Dorsolateral prefrontal cortex (tissue), 120 donors: ENCODE measurements at regions of chr3 and their contacts with region 1.

Region 1: DNA sequence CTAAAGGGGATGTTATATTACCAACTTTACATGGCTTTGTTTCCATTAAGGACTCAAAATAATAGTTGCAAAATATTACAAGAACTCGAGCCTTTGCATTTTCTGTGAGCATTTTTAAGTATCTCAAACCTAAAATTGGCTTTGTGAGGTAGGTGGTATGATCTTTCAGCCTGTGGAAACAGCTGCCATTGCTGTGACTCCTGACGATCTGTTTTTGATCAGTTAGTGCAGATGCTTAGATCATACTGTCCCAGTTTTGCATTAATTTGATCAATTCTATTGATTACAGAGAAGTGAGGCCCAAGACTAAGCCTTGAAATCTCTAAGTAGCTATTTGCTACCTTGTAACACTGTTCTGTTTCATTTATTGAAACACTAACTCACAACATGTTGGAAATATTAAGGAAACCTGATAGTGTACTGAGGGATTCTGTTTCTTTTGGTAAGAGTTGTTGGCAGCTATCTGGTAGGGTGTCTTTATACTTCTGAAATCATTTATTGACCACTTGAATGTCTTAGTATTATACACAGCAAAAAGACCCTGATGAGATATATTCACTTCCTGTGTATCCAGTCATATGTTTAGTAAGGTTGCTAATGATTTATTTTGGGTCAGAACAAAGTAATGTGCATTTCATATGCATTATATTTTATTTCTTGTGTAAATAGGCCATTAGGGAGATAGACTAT is 14.8 kb downstream of the SKIL start:
- DNase-seq: no peak
- H3K4me3 ChIP-seq: peak overlapping the region in 7 of 59 donors; percentile 1 to 22 (median 7)
- H3K27ac ChIP-seq: peak overlapping the region in 4 of 59 donors; percentile 6 to 46 (median 36)
- H3K27me3 ChIP-seq: no peaks in the 10 kb centered on the region
- CTCF ChIP-seq: no peak

Region 2: GRCh38 chr3:170405101-170405500 is 32.8 kb after region 1 on chr3:
- intact Hi-C with region 1: loop called in 1 of 2 experiments (anchors 5 kb)
- DNase-seq: no peak
- H3K4me3 ChIP-seq: no peak overlapping the region
- H3K27ac ChIP-seq: no peak overlapping the region
- H3K27me3 ChIP-seq: no peaks in the 10 kb centered on the region
- CTCF ChIP-seq: no peak